ENCODE measurements at regions of chr3 and their contacts with region 1.

Region 1: GRCh38 chr3:33131331-33132018 is 17.7 kb downstream of the CRTAP start:
- DNase-seq: peak; percentile 75
- H3K4me3 Mint-ChIP-seq: no peak overlapping the region
- H3K27ac Mint-ChIP-seq: no peak overlapping the region
- H3K4me1 Mint-ChIP-seq: no peaks in the 10 kb centered on the region
- H3K27me3 Mint-ChIP-seq: no peaks in the 10 kb centered on the region
- CTCF ChIP-seq: peak; percentile 71

Region 2: DNA sequence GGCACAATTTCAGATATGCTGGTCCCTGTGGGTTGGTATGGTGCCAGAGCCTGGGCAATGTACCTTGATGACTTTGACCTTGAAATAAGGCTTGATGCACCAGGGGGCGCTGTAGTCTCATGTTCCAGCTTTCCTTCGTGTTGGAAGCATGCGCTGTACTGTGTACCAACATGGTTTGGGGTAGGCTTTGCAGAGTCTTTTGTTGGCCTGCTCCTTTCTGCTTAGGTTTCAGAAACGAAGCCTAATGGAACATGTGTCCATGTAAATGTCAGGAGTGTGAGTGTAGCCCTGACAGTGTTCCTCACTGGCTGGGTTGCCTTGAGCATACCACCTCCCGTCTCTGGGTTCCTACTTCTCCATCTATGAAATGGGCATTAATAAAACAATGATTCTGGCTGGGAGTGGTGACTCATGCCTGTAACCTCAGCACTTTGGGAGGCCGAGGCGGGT is 183.7 kb before region 1 on chr3:
- CTCF ChIA-PET with region 1: no interaction called
- POLR2A ChIA-PET with region 1: no interaction called
- intact Hi-C with region 1: loop called (anchors 1 kb)
- DNase-seq: peak; percentile 91
- H3K4me3 Mint-ChIP-seq: no peak overlapping the region
- H3K27ac Mint-ChIP-seq: no peak overlapping the region
- H3K4me1 Mint-ChIP-seq: no peaks in the 10 kb centered on the region
- H3K27me3 Mint-ChIP-seq: no peaks in the 10 kb centered on the region
- CTCF ChIP-seq: peak; percentile 61

Region 3: GRCh38 chr3:33144433-33144832 is 13.0 kb after region 1 on chr3:
- CTCF ChIA-PET with region 1: interaction called, 51 read pairs
- POLR2A ChIA-PET with region 1: interaction called, 7 read pairs
- intact Hi-C with region 1: no loop called
- DNase-seq: no peak
- H3K4me3 Mint-ChIP-seq: no peak overlapping the region
- H3K27ac Mint-ChIP-seq: no peak overlapping the region
- H3K4me1 Mint-ChIP-seq: peaks cover 9% of the 10 kb centered on the region
- H3K27me3 Mint-ChIP-seq: no peaks in the 10 kb centered on the region
- CTCF ChIP-seq: peak; percentile 34

Region 4: GRCh38 chr3:33360136-33360825 is 228.8 kb after region 1 on chr3:
- CTCF ChIA-PET with region 1: interaction called, 16 read pairs
- POLR2A ChIA-PET with region 1: no interaction called
- intact Hi-C with region 1: no loop called
- DNase-seq: peak; percentile 54
- H3K4me3 Mint-ChIP-seq: peak overlapping the region; percentile 14
- H3K27ac Mint-ChIP-seq: peak overlapping the region; percentile 70
- H3K4me1 Mint-ChIP-seq: peaks cover 12% of the 10 kb centered on the region
- H3K27me3 Mint-ChIP-seq: no peaks in the 10 kb centered on the region
- CTCF ChIP-seq: no peak

Region 5: DNA sequence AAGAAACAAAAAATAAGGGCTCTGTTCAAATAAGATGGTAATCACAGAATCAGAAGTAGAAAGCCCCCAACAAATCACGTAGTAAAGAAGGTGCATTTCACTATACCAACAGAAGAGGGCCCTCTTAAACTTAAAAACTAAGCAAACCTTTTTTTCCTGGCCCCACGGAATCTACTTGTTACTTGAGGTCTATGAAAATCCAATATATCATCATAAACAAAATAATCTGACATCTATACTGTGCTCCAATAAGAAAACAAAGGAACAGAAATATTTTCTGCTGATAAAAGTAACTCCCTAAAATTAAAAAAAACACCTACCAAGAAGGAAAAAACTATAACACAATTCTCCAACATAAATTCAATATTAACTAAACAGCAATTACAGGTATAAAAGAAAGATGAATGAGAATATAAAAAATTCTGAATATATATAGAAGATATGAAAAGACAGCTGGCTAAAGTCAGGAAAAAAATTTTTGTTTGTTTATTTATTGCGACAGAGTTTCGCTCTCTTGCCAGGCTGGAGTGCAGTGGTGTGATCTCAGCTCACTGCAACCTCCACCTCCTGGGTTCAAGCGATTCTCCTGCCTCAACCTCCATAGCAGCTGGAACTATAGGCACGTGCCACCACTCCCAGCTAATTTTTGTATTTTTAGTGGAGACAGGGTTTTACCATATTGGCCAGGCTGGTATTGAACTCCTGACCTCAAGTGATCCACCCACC is 504.8 kb after region 1 on chr3:
- CTCF ChIA-PET with region 1: interaction called, 7 read pairs
- POLR2A ChIA-PET with region 1: no interaction called
- intact Hi-C with region 1: loop called (anchors 10 kb)
- DNase-seq: peak; percentile 60
- H3K4me3 Mint-ChIP-seq: no peak overlapping the region
- H3K27ac Mint-ChIP-seq: peak overlapping the region; percentile 2
- H3K4me1 Mint-ChIP-seq: peaks cover 5% of the 10 kb centered on the region
- H3K27me3 Mint-ChIP-seq: no peaks in the 10 kb centered on the region
- CTCF ChIP-seq: peak; percentile 74